ENCODE measurements at regions of chr7 and their contacts with region 1.

Region 1: DNA sequence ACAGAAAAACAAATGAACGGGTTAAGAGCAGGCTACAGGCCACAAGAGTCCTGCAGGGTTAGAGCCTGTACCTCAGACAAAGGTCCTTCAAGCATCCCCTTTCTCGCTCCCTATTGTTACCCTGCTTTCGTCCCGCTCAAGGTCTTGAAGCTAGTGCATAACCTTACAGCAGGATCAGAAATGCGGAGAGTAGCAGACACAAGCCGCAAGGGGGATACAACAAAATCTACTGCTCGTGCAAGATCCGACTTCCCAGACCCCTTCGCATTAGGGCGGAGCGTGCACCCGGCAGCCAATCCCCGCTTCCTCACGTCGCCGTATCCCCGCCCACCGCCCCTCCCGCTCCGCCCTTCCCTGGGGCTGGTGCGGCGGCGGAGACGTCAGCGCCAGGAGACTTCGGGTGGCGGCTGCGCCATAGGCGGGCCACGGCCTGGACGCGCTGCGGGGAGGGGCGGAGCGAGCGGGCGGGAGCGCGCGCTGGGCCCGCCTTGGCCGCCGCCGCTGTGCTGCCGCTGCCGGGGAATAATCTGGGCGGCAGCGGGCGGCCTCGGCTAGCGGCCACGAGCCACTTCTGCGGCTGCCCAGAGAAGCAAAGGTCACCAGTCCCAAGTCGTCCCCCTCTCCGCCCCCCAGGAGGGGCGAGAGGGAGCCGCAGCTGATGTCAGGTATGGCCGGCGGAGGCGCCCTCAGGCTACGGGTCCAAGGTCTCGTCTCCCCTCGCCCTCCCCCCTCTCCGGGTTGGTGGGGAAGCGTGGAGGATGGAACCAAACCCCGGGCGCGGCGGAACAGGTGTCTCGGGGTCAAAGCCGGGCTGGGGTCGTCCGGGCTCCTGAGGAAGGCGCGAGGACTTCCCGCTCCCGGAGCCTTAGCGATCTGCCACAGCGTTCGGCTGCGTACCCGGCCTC is at the start of gene C1GALT1:
- DNase-seq: peak; percentile 94
- H3K4me3 Mint-ChIP-seq: peak within 1 kb of the TSS; percentile 94
- H3K27ac Mint-ChIP-seq: peak within 1 kb of the TSS; percentile 99
- H3K4me1 Mint-ChIP-seq: peaks cover 6% of the 10 kb centered on the region
- H3K27me3 Mint-ChIP-seq: no peaks in the 10 kb centered on the region
- total RNA-seq, gene C1GALT1: 35.8 and 41.4 TPM in 2 replicates

Region 2: DNA sequence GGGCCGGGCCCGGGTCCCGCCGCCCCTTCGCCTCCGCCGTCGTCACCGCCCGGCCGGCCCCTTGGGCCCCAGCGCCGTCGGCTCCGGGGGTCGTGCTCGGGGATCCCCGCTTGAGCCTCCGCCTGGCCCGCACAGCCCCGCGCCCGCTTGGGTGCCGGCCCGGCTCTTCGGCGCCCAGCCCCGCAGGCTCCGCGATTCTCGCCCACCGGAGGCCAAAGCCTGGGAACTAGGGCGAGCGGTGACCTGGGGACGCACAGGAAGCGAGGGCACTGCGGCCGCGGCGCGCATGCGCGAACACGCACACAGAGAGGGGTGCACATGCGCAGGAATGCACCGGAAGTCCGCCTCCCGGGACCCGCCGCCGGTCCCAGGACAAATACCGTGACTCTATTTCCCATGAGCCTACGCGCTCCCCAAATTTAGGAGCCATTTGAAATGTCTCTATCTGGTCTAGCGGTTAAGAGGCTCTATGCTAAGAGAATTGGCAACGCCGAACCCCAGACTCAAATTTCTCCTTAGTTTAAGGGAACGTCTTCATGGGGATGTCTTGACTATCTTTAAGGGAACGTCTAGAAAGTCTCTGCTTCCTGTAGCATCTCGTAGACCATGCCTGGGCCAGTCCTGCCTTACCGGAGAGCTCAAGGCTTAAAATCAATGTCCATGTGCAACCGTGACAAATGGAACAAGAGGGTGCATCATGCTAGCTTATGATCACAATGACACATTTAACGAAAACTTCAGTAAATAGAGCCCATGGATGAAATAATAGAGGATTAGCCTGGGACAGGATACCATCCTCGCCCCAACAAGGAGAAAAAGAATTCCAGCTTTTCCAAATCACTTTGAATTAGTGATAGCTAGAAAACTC is 475.5 kb before region 1 on chr7 and contains the start of gene ZNF12:
- intact Hi-C with region 1: loop called (anchors 5 kb)
- DNase-seq: peak; percentile 93
- H3K4me3 Mint-ChIP-seq: peak within 1 kb of the TSS; percentile 95
- H3K27ac Mint-ChIP-seq: peak within 1 kb of the TSS; percentile 90
- H3K4me1 Mint-ChIP-seq: peaks cover 31% of the 10 kb centered on the region
- H3K27me3 Mint-ChIP-seq: peaks cover 2% of the 10 kb centered on the region
- total RNA-seq, gene ZNF12: 19.7 and 20.9 TPM in 2 replicates

Region 3: GRCh38 chr7:7157177-7157886 is 25.1 kb before region 1 on chr7:
- intact Hi-C with region 1: loop called (anchors 1 kb)
- DNase-seq: peak; percentile 65
- H3K4me3 Mint-ChIP-seq: peak overlapping the region; percentile 74
- H3K27ac Mint-ChIP-seq: peak overlapping the region; percentile 87
- H3K4me1 Mint-ChIP-seq: peaks cover 49% of the 10 kb centered on the region
- H3K27me3 Mint-ChIP-seq: no peaks in the 10 kb centered on the region

Region 4: DNA sequence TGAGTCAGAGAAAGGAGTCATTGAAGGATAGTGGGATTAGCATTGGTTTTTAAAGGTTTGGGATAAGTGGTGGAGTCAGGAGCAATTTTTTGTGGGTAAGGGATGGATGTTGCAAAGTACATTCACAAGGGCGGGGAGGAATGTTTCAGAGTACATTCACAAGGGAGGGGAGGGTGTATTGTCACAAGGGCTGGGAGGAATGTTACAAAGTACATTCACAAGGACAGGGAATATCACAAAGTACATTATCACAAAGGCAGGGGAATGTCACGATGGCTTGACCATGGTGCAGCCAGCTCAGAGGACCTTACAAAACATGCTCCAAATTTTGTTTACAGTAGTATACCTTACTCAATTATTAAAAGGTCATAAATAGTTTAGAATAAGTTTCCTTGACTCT is 30.2 kb after region 1 on chr7:
- intact Hi-C with region 1: no loop called
- DNase-seq: no peak
- H3K4me3 Mint-ChIP-seq: no peak overlapping the region
- H3K27ac Mint-ChIP-seq: no peak overlapping the region
- H3K4me1 Mint-ChIP-seq: peaks cover 6% of the 10 kb centered on the region
- H3K27me3 Mint-ChIP-seq: no peaks in the 10 kb centered on the region

Region 5: GRCh38 chr7:7257899-7258692 is 75.7 kb after region 1 on chr7:
- intact Hi-C with region 1: loop called (anchors 1 kb)
- DNase-seq: no peak
- H3K4me3 Mint-ChIP-seq: peak overlapping the region; percentile 55
- H3K27ac Mint-ChIP-seq: peak overlapping the region; percentile 82
- H3K4me1 Mint-ChIP-seq: peaks cover 49% of the 10 kb centered on the region
- H3K27me3 Mint-ChIP-seq: no peaks in the 10 kb centered on the region

Region 6: GRCh38 chr7:7290429-7291118 is 108.2 kb after region 1 on chr7:
- intact Hi-C with region 1: no loop called
- DNase-seq: no peak
- H3K4me3 Mint-ChIP-seq: no peak overlapping the region
- H3K27ac Mint-ChIP-seq: no peak overlapping the region
- H3K4me1 Mint-ChIP-seq: no peaks in the 10 kb centered on the region
- H3K27me3 Mint-ChIP-seq: peaks cover 1% of the 10 kb centered on the region

Region 7: GRCh38 chr7:7542251-7542835 is 359.9 kb after region 1 on chr7:
- intact Hi-C with region 1: loop called (anchors 2 kb)
- DNase-seq: no peak
- H3K4me3 Mint-ChIP-seq: no peak overlapping the region
- H3K27ac Mint-ChIP-seq: no peak overlapping the region
- H3K4me1 Mint-ChIP-seq: no peaks in the 10 kb centered on the region
- H3K27me3 Mint-ChIP-seq: peaks cover 8% of the 10 kb centered on the region

Region 8: DNA sequence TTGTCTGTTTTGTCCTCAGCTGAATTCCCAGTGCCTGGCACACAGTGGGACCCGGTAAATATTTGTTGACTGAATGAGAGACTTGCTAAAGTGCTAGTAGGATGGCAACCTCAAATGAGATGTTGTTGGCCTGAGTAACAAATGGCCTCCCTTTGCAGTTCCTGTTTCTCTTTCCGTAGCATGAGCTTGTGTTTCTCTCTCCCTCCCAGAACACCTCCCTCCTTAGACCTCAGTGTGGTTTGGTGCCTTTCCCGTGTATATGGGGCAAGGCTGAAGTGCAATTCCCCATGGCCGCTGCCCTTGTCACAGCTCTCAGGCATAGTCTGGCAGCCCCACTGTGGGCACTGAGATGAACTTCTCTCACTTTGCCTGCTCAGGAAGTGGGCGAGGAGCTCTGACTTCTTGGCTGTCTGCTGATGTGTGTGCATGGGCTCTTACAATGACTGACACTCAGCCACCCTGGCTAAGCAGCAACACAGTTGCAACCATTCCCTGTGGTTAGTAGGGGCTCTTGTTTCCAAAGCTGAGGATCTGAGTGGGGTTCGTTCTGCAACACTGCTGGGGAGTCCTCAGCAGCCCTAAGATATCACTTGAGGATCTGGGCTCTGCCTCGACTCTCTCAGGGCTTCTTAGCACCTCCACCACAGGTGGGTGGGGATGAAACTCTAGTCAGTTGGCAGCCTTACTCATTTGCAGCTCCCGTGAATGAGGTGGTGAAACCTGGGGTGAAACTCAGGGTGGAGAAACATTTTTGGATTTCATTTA is 943.5 kb after region 1 on chr7:
- intact Hi-C with region 1: loop called (anchors 5 kb)
- DNase-seq: peak; percentile 69
- H3K4me3 Mint-ChIP-seq: peak overlapping the region; percentile 64
- H3K27ac Mint-ChIP-seq: peak overlapping the region; percentile 98
- H3K4me1 Mint-ChIP-seq: peaks cover 82% of the 10 kb centered on the region
- H3K27me3 Mint-ChIP-seq: peaks cover 5% of the 10 kb centered on the region